Naive thymus-derived CD4-positive, alpha-beta T cell (primary cell): ENCODE measurements at regions of chr17 and their contacts with region 1.

Region 1: DNA sequence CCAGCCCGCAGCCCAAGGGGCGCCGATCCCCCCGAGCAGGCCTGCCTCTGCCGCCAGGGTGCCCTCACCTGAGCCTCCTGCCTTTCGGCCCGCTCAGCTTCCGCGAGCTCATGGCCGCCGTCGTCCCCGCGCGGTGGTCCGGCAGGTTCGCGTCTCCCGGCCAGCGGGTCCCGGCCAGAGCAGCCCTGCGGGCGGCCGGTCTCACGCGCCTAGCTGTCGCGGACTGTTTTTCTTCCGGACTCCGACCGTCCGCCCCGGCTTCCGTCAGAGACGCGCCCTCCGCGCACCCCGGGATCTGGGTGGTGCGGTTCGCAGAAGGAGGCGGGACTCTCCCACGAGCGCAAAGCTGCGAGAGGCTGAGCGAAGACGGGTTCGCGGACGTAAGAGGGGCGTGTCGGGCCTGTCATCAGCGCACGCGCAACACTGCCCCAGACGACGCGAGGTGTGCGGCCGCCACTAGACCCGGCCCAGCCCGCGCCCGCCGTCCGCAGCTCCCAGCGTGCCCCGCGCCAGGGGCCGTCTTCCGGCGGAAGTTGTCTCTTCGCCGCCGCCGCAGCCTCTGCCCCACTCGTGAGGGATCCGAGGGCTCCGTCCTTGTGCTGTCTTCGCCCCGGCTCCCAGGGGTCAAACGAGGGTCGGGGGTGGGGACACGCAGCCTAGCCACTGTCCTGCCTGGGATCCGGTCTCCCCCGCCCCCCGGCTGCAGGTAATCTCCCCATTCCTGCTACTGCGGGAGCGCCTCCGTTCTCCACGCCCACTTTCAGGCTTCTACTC is at the start of gene INPP5K:
- DNase-seq: peak; percentile 92 to 99 (median 97)
- ATAC-seq: peak; percentile 98
- H3K4me3 ChIP-seq: peak within 1 kb of the TSS; percentile 84
- H3K4me3 Mint-ChIP-seq: peak within 1 kb of the TSS; percentile 78 to 93 (median 91)
- H3K27ac ChIP-seq: peak within 1 kb of the TSS; percentile 97
- H3K27ac Mint-ChIP-seq: peak within 1 kb of the TSS; percentile 68 to 97 (median 92)
- H3K4me1 ChIP-seq: peaks cover 9 to 14% of the 10 kb centered on the region in 2 donors
- H3K4me1 Mint-ChIP-seq: peaks cover 18 to 47% (median 29%) of the 10 kb centered on the region in 7 donors
- H3K27me3 ChIP-seq: no peaks in the 10 kb centered on the region
- H3K27me3 Mint-ChIP-seq: no peaks in the 10 kb centered on the region
- total RNA-seq, gene INPP5K: 50.5 to 184 (median 84.2) TPM

Region 2: DNA sequence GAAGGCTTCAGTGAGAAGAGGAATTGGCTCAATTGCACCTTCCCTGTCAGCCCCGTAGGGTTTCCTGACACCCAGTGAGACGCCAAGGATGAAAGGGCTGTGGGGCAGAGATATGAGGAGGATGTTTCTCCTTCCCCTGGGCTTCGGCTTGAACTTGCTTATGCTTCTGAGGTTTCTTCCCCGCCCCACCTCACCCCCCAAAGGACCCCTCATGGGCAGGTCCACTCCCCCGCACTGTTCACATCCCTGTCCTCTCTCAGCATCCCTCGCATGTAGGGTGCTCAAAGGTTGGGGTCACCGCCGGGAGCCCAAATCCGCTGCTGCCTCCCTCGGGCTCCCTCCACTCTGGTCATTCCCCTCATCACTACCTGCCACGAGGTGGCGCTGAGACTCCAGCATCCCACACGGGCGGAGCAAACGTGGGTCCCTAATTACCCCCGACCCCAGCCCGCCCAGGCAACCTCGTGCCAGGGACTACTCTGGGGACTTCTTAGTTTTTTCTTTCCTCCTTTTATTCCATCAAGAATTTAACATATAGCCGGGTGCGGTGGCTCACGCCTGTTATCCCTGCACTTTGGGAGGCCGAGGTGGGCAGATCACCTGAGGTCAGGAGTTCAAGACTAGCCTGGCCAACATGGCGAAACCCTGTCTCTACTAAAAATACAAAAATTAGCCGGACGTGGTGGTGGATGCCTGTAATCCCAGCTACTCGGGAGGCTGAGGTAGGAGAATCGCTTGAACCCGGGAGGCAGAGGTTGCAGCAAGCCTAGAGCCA is 240.4 kb before region 1 on chr17:
- CTCF ChIA-PET with region 1: no interaction called
- POLR2A ChIA-PET with region 1: no interaction called
- intact Hi-C with region 1: loop called in 1 of 2 experiments (anchors 5 kb)
- DNase-seq: peak; percentile 45 to 79 (median 68)
- ATAC-seq: peak; percentile 89
- H3K4me3 ChIP-seq: no peak overlapping the region
- H3K4me3 Mint-ChIP-seq: peak overlapping the region in 7 of 10 donors; percentile 30 to 72 (median 52)
- H3K27ac ChIP-seq: no peak overlapping the region
- H3K27ac Mint-ChIP-seq: peak overlapping the region in 4 of 9 donors; percentile 10 to 77 (median 48)
- H3K4me1 ChIP-seq: peaks cover 4 to 5% of the 10 kb centered on the region in 2 donors
- H3K4me1 Mint-ChIP-seq: peaks cover 0 to 12% (median 8%) of the 10 kb centered on the region in 7 donors
- H3K27me3 ChIP-seq: peaks cover 0 to 5% of the 10 kb centered on the region in 2 donors
- H3K27me3 Mint-ChIP-seq: peaks cover 25 to 39% (median 35%) of the 10 kb centered on the region in 5 donors

Region 3: DNA sequence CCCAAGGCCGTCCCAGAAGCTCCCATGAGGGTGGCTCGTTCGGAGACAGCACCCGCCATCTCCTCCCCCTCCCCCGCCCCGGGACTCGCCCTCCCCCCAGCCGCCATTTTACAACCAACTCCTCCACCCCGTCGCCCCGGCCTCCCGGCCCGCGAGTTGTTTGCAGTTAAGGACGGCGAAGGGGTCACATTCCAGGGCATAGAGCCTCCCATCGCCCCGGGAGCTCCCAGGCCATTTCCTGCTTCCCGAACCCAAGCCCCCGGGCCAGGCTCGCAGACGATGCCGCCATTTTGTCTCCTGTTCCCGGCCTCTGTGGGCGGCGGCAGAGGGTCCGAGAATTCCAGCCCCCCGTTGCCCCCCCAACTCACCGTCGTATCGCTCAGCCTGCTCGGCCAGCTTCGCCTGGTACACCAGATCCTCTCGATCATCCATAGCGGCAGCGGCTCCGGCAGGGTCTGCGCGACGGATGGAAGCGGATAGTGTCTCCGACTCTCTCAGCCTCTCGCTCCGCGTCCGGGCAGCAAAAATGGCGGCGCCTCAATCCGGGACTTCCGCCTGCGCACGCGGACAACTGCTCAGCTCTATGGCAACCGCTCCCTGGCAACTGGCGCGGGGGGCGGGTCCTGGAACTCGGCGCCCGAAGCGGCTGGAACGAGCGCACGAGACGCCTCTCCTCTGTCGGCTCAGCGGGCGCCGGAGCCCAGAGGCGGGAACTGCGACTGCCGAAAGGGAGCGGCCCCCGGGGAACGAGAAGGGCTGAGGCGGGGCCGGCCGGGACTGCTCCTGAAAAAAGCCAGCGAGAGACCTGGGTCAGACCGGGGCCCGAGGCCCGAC is 116.7 kb before region 1 on chr17 and contains the start of gene YWHAE:
- CTCF ChIA-PET with region 1: no interaction called
- POLR2A ChIA-PET with region 1: interaction called, 15 read pairs
- intact Hi-C with region 1: loop called (anchors 1 kb)
- DNase-seq: peak; percentile 89 to 97 (median 94)
- ATAC-seq: peak; percentile 93
- H3K4me3 ChIP-seq: peak within 1 kb of the TSS; percentile 100
- H3K4me3 Mint-ChIP-seq: peak within 1 kb of the TSS; percentile 97 to 100 (median 99)
- H3K27ac ChIP-seq: peak within 1 kb of the TSS; percentile 98
- H3K27ac Mint-ChIP-seq: peak within 1 kb of the TSS; percentile 97 to 100 (median 99)
- H3K4me1 ChIP-seq: peaks cover 23 to 24% of the 10 kb centered on the region in 2 donors
- H3K4me1 Mint-ChIP-seq: peaks cover 18 to 45% (median 38%) of the 10 kb centered on the region in 7 donors
- H3K27me3 ChIP-seq: no peaks in the 10 kb centered on the region
- H3K27me3 Mint-ChIP-seq: peaks cover 0 to 6% (median 0%) of the 10 kb centered on the region in 5 donors
- total RNA-seq, gene YWHAE: 119 to 317 (median 127) TPM

Region 4: GRCh38 chr17:1474402-1475189 is 42.0 kb before region 1 on chr17:
- CTCF ChIA-PET with region 1: no interaction called
- POLR2A ChIA-PET with region 1: no interaction called
- intact Hi-C with region 1: loop called in 1 of 2 experiments (anchors 5 kb)
- DNase-seq: no peak
- ATAC-seq: no peak
- H3K4me3 ChIP-seq: no peak overlapping the region
- H3K4me3 Mint-ChIP-seq: no peak overlapping the region
- H3K27ac ChIP-seq: no peak overlapping the region
- H3K27ac Mint-ChIP-seq: no peak overlapping the region
- H3K4me1 ChIP-seq: peaks cover 0 to 7% of the 10 kb centered on the region in 2 donors
- H3K4me1 Mint-ChIP-seq: peaks cover 15 to 19% (median 18%) of the 10 kb centered on the region in 7 donors
- H3K27me3 ChIP-seq: no peaks in the 10 kb centered on the region
- H3K27me3 Mint-ChIP-seq: no peaks in the 10 kb centered on the region

Region 5: DNA sequence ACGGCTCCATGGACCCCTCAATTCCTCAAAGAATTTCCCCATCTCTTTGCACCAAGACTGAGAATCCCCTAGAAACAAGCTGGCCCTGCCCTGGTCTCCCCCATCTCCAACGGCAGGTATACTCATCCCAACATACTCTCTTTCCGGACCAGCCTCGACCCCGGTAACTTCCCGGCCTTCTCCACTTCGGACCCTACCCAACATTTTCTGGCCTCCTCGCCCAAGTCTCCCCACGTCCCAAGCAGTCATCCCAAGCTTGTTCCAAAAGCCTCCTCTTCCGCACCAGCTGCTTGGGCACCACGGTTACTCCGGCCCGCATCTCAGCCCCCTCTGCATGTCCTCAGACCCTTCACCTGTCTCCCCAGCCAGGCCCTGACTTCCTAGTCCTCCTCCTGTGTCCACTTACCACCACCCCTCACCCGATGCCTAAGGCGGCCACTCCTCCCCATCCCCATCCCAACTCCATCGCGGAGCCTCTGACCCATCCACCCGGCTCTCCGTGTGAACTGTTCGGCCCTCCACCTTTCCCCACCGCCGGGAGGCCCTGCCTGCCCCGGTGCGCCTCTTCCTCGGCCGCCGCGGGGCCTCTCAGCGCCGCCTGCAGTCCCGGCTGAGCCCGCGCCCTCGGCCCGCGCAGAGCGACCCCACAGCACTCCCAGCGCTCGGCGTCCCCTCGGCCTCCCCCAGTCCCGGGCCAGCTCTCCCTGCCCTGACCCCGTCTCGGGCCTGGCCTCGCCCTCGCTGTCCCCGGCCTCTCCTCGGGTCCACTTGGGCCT is 45.0 kb after region 1 on chr17:
- CTCF ChIA-PET with region 1: no interaction called
- POLR2A ChIA-PET with region 1: interaction called, 7 read pairs
- intact Hi-C with region 1: loop called (anchors 1 kb)
- DNase-seq: peak in 8 of 9 donors; percentile 28 to 58 (median 36)
- ATAC-seq: peak; percentile 37
- H3K4me3 ChIP-seq: peak overlapping the region; percentile 39
- H3K4me3 Mint-ChIP-seq: peak overlapping the region; percentile 73 to 89 (median 82)
- H3K27ac ChIP-seq: peak overlapping the region; percentile 76
- H3K27ac Mint-ChIP-seq: peak overlapping the region in 8 of 9 donors; percentile 54 to 90 (median 76)
- H3K4me1 ChIP-seq: peaks cover 9 to 12% of the 10 kb centered on the region in 2 donors
- H3K4me1 Mint-ChIP-seq: peaks cover 25 to 54% (median 43%) of the 10 kb centered on the region in 7 donors
- H3K27me3 ChIP-seq: no peaks in the 10 kb centered on the region
- H3K27me3 Mint-ChIP-seq: peaks cover 0 to 13% (median 0%) of the 10 kb centered on the region in 5 donors

Region 6: GRCh38 chr17:1648963-1649843 is 132.6 kb after region 1 on chr17:
- CTCF ChIA-PET with region 1: no interaction called
- POLR2A ChIA-PET with region 1: no interaction called
- intact Hi-C with region 1: loop called in 1 of 2 experiments (anchors 2 kb)
- DNase-seq: peak; percentile 88 to 97 (median 93)
- ATAC-seq: peak; percentile 90
- H3K4me3 ChIP-seq: peak overlapping the region; percentile 64
- H3K4me3 Mint-ChIP-seq: peak overlapping the region; percentile 65 to 81 (median 74)
- H3K27ac ChIP-seq: peak overlapping the region; percentile 69
- H3K27ac Mint-ChIP-seq: peak overlapping the region in 5 of 9 donors; percentile 38 to 58 (median 55)
- H3K4me1 ChIP-seq: peaks cover 15 to 21% of the 10 kb centered on the region in 2 donors
- H3K4me1 Mint-ChIP-seq: peaks cover 0 to 38% (median 10%) of the 10 kb centered on the region in 7 donors
- H3K27me3 ChIP-seq: no peaks in the 10 kb centered on the region
- H3K27me3 Mint-ChIP-seq: no peaks in the 10 kb centered on the region